ENCODE measurements at regions of chr14 and their contacts with region 1.

Region 1: GRCh38 chr14:64294672-64295413 is 672 bp upstream of the ESR2 start:
- DNase-seq: peak in 8 of 10 donors; percentile 39 to 91 (median 70)

Region 2: GRCh38 chr14:64012720-64013119 is 282.1 kb before region 1 on chr14:
- intact Hi-C with region 1: loop called (anchors 10 kb)
- DNase-seq: no peak

Region 3: DNA sequence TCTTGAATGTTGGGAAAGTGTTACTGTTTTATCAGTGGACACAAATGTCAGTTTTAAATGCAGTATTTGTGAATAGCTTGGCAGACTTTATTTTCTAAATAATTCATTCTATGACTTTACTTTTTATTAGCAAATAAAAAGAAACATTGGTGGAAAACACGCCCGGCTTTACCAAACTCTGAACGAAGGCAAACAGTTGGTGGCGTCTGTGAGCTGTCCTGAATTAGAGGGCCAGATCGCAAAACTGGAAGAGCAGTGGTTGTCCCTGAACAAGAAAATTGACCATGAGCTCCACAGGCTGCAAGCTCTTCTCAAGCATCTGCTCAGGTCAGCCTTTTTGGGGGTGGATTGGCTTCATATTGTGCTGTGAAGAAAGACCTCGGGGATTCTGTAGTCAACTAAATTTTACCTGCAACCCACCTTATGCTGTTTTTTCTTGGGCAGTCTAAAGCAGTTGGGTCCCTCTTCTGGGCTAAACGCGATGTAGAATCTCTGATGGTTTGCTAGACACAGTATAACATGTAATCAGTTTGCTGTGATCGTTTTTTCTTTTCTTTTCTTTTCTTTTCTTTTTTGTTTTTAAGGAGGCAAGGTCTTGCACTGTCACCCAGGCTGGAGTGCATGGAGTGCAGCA is 157.1 kb before region 1 on chr14:
- intact Hi-C with region 1: loop called (anchors 2 kb)
- DNase-seq: peak in 1 of 10 donors; percentile 17

Region 4: DNA sequence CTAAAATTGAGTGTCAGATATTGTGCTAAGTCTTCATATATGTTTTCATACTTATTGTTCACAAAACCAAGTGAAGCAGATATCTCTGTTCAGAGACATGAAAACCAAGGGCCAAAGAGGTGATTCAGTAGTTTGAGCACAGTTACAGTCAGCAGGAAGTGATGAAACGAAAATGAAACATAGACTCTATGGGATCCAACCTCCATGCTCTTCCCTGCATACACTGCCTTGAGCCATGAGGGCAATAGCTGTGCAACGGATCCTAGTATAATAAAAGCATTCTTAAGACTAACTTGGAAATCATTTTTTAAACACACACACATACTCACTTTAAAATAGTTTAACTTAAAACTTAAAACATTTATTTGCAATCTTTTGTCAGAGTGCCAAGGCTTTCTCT is 28.6 kb before region 1 on chr14:
- intact Hi-C with region 1: no loop called
- DNase-seq: no peak

Region 5: GRCh38 chr14:64338616-64339316 is 43.9 kb after region 1 on chr14:
- intact Hi-C with region 1: no loop called
- DNase-seq: peak; percentile 76 to 99 (median 94)

Measured in posterior cingulate gyrus (tissue), 11 donors.